Caco-2 (cell line): ENCODE measurements at regions of chr7 and their contacts with region 1.

Region 1: DNA sequence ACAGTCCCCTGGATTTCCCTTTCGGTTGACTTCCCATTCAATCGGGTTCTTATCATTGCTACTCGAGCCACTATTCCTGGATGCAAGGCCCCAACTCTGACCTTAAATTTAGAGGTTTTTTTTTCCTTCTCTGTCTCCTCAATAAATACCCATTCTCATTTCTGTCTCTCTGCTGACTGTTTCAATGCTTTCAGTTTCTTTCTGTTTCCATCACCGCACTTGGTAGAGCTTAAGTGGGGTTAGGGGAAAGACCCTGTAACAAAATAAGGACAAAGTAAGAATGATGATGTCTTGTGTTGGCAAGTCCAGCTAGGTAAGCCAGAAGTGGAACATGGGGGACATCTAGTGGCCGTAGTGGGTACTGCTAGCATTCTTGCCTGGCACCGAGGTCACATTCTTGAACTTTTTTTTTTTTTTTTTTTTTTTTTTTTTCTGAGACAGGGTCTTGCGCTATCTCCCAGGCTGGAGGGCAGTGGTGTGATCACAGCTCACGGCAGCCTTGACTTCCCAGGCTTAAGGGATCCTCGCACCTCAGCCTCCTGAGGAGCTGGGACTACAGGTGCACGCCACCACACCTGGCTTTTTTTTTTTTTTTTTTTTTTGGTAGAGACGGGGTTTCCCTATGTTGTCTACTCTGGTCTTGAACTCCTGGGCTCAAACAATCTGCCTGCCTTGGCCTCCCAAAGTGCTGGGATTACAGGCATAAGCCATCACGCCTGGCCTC is 40.3 kb downstream of the ZC3HC1 start:
- DNase-seq: peak; percentile 91 to 93
- H3K4me3 ChIP-seq: no peak overlapping the region
- H3K4me3 Mint-ChIP-seq: no peak overlapping the region
- H3K27ac Mint-ChIP-seq: peak overlapping the region; percentile 20
- H3K4me1 ChIP-seq: peaks cover 9% of the 10 kb centered on the region; the same call in 1 of the 2 replicates
- H3K4me1 Mint-ChIP-seq: peaks cover 6% of the 10 kb centered on the region
- H3K27me3 ChIP-seq: no peaks in the 10 kb centered on the region
- H3K27me3 Mint-ChIP-seq: no peaks in the 10 kb centered on the region
- CTCF ChIP-seq: peak; percentile 91 to 93

Region 2: DNA sequence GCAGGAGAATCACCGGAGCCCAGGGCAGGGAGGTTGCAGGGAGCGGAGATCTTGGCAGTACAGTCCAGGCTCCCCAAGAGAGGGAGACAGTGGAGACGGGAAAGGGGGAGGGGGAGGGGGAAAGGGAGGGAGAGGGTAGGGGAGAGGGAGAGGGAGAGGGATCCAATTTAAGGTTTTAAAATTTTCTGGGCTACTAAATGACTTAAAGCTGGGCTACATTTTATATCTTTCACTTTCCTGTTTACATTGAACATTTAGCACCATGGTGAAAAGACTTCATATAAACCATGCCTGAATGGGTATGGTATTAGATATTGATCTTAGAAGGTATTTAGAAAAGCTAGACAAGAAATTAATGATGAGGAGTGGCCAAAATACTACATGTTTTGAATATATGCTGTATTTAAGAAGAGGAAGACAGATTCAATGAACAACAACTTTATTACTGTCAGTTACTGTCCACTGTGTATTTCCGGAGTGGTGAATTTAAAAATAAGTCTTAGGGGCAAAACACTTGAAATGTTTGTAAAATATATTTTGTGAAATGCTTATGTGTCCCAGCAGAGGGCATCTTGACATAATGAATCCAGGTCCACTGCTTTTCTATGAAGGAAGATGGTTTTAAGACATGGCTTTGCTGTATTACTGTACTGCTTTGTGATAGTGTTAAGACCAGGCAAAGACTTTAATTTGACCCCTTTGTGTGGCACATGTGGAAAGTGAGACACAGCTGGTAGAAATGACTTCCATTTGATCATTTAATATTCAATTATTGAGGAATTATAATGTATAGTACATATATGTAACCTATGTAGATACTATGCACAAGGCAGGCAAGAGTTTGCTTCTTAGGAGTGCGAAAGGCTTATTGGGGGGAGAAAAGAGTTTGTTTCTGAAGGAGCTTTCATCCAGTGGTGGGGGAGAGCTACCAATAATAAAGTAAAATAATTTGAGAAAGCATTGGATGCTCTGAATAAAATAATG is 346.5 kb before region 1 on chr7:
- CTCF ChIA-PET with region 1: no interaction called
- POLR2A ChIA-PET with region 1: no interaction called
- intact Hi-C with region 1: loop called (anchors 1 kb)
- DNase-seq: peak in 1 of 2 experiments; percentile 42
- H3K4me3 ChIP-seq: no peak overlapping the region
- H3K4me3 Mint-ChIP-seq: no peak overlapping the region
- H3K27ac Mint-ChIP-seq: no peak overlapping the region
- H3K4me1 ChIP-seq: no peaks in the 10 kb centered on the region
- H3K4me1 Mint-ChIP-seq: no peaks in the 10 kb centered on the region
- H3K27me3 ChIP-seq: no peaks in the 10 kb centered on the region
- H3K27me3 Mint-ChIP-seq: no peaks in the 10 kb centered on the region
- CTCF ChIP-seq: peak; percentile 54 to 57

Region 3: GRCh38 chr7:129721068-129721467 is 289.8 kb before region 1 on chr7:
- CTCF ChIA-PET with region 1: no interaction called
- POLR2A ChIA-PET with region 1: no interaction called
- intact Hi-C with region 1: no loop called
- DNase-seq: no peak
- H3K4me3 ChIP-seq: no peak overlapping the region
- H3K4me3 Mint-ChIP-seq: no peak overlapping the region
- H3K27ac Mint-ChIP-seq: no peak overlapping the region
- H3K4me1 ChIP-seq: no peaks in the 10 kb centered on the region
- H3K4me1 Mint-ChIP-seq: peaks cover 6% of the 10 kb centered on the region
- H3K27me3 ChIP-seq: no peaks in the 10 kb centered on the region
- H3K27me3 Mint-ChIP-seq: no peaks in the 10 kb centered on the region
- CTCF ChIP-seq: no peak

Region 4: DNA sequence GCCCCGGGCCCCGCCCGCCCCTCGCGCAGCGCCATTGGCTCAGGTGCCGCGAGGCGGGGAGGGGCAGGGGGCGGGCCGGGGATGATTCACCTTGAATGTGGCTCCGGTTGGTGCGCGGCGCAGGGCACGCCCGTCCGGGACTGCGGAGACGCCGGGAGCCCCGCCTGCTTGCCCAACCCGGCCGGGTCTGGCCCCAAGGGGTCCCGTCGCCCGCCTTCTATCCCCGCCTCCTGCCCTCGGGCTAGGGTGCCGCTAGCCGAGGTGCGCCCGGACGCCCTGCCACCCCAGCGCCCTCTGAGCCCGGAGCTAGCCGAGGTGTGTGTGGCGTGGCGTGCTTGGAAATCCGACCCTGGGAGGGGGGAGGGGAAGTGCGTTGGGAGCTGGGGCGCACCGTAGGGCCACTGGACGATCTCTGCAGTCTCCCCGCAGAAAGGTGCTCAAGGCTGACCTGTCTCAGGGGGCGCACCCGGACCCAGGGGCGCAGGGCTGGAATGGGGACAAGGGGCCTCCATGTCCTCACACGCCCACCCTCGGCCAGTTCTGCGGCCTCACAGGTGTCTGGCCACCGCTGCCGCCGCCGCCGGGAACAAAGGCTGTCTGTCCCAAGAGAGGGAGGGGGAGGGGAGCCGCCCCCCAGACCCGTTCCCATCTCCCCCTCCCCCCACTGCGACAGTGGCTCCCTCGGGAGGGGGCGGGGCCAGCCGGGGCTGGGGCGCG is 230.4 kb before region 1 on chr7:
- CTCF ChIA-PET with region 1: interaction called, 5 read pairs
- POLR2A ChIA-PET with region 1: no interaction called
- intact Hi-C with region 1: loop called (anchors 5 kb)
- DNase-seq: peak; percentile 96 to 97
- H3K4me3 ChIP-seq: peak overlapping the region; percentile 84
- H3K4me3 Mint-ChIP-seq: peak overlapping the region; percentile 81
- H3K27ac Mint-ChIP-seq: no peak overlapping the region
- H3K4me1 ChIP-seq: peaks cover 12% of the 10 kb centered on the region
- H3K4me1 Mint-ChIP-seq: peaks cover 6% of the 10 kb centered on the region
- H3K27me3 ChIP-seq: no peaks in the 10 kb centered on the region
- H3K27me3 Mint-ChIP-seq: no peaks in the 10 kb centered on the region
- CTCF ChIP-seq: no peak

Region 5: DNA sequence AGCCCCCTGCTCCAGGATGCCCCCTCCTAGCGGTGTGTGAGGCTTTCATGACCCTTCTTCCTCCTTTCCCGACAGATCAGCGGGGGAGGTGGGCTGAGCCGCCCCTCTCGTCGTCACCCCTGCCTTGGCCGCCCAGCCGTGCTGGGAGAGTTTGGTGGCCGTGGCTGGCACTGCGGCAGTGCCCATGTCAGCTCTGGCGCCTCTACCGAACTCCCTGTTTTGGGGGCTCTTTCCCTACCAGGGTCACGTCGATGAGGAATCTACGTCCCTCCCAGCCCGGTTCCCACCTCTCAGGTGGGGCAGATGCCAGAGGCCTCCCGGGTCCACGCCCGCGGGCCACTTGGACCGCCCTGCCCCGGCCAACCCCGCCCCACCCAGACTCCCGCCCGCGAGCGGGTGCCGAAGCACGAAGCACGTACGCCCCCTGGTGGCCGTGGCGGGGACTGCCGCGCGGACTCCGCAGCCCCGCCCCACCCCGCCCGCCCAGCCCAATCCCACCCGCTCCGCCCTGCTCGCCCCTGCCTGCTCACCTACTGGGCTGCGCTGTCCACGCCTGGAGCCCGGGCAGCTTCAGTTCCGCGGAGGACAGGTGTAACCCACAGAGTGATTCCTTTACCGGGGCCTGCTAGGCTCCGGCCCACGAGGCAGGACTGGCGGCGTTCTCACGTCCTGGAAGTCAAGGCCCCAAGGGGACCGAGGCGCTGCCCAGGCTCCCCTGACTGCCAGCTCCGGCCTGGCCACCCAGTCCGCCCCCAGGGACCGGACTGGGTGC is 185.2 kb before region 1 on chr7:
- CTCF ChIA-PET with region 1: interaction called, 23 read pairs
- POLR2A ChIA-PET with region 1: interaction called, 3 read pairs
- intact Hi-C with region 1: loop called (anchors 1 kb)
- DNase-seq: peak; percentile 90 to 95
- H3K4me3 ChIP-seq: peak overlapping the region; percentile 82
- H3K4me3 Mint-ChIP-seq: peak overlapping the region; percentile 89
- H3K27ac Mint-ChIP-seq: peak overlapping the region; percentile 86
- H3K4me1 ChIP-seq: peaks cover 17% of the 10 kb centered on the region
- H3K4me1 Mint-ChIP-seq: peaks cover 4% of the 10 kb centered on the region
- H3K27me3 ChIP-seq: no peaks in the 10 kb centered on the region
- H3K27me3 Mint-ChIP-seq: no peaks in the 10 kb centered on the region
- CTCF ChIP-seq: peak; percentile 74 to 94

Region 6: DNA sequence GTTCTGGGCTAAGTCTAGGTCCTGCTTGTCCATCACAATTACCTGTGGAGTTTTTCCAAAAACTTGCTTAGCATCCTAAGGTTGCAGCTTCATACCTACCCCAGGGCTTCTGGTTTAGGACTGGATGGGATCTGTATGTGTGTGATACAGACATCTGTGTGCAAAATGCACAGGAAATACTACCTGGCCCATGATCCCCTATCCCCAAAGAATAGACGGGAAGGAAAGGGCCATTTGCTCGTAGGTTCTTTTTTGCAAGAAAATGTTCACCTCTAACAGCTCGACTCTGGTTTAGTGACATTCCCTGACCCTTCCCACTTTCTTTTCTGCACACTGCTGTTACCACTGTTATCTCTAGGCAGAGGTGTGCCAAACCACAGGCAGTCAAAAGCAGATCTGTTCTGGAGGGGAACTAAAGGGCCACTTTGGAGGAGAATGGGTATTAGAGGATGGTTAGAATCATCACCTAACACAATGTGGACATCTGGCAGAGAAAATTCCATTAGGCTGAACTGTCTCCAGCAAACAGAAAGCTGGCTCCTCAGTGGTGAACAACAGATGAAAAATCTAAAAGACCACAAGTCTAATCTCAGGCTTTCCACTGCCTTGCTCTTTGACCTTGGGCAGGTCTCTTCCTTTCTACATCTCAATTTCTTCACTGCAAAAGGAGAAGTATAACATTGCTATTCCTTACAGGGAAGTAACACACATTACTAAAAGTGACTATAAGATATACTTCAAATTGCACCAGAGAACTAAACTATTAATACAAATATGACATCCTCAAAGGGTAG is 165.5 kb before region 1 on chr7:
- CTCF ChIA-PET with region 1: no interaction called
- POLR2A ChIA-PET with region 1: interaction called, 11 read pairs
- intact Hi-C with region 1: no loop called
- DNase-seq: no peak
- H3K4me3 ChIP-seq: no peak overlapping the region
- H3K4me3 Mint-ChIP-seq: no peak overlapping the region
- H3K27ac Mint-ChIP-seq: no peak overlapping the region
- H3K4me1 ChIP-seq: peaks cover 9% of the 10 kb centered on the region
- H3K4me1 Mint-ChIP-seq: no peaks in the 10 kb centered on the region
- H3K27me3 ChIP-seq: no peaks in the 10 kb centered on the region
- H3K27me3 Mint-ChIP-seq: no peaks in the 10 kb centered on the region
- CTCF ChIP-seq: no peak

Region 7: DNA sequence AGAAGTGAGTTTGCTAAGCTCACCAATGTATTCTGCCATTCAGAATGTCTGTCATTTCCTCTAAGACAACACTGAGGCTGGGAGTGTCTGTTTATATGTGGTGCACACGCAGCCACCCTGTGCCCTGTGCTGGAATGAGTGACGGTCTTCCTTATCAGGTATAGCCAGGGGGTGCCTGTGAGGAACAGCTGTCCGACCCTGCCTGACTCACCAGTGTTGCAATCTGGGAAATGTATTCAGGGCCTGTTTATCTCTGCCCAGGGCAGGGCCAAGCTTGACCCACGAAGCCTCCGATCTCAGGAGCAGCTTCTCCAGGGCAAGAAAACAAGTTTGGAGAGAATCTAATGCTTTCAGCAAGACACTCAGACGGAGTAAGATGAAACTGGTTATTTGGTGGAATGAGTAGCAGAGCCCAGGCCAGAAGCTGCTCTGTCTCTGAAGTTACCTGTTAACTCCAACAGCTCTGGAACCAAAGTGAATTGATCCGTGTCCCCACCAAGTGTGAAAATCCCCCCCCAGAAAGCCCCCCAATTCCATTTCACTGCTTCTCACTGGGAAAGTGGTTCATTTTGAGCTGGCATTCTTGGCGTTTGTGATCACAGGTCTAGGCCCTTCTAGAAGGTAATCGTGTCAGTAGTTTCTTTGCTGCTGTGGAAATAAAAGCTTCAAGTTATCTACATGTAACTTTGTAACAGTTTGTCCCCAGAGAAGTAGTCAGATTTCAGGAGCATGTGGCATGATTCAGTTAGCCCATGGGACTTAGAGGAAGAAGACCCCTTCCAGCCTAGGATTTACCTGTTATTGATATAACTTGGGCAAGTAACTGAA is 52.0 kb before region 1 on chr7:
- CTCF ChIA-PET with region 1: interaction called, 10 read pairs
- POLR2A ChIA-PET with region 1: no interaction called
- intact Hi-C with region 1: loop called (anchors 2 kb)
- DNase-seq: peak; percentile 87 to 94
- H3K4me3 ChIP-seq: no peak overlapping the region
- H3K4me3 Mint-ChIP-seq: peak overlapping the region; percentile 24
- H3K27ac Mint-ChIP-seq: peak overlapping the region; percentile 79
- H3K4me1 ChIP-seq: peaks cover 25% of the 10 kb centered on the region
- H3K4me1 Mint-ChIP-seq: peaks cover 35% of the 10 kb centered on the region
- H3K27me3 ChIP-seq: no peaks in the 10 kb centered on the region
- H3K27me3 Mint-ChIP-seq: no peaks in the 10 kb centered on the region
- CTCF ChIP-seq: no peak

Region 8: DNA sequence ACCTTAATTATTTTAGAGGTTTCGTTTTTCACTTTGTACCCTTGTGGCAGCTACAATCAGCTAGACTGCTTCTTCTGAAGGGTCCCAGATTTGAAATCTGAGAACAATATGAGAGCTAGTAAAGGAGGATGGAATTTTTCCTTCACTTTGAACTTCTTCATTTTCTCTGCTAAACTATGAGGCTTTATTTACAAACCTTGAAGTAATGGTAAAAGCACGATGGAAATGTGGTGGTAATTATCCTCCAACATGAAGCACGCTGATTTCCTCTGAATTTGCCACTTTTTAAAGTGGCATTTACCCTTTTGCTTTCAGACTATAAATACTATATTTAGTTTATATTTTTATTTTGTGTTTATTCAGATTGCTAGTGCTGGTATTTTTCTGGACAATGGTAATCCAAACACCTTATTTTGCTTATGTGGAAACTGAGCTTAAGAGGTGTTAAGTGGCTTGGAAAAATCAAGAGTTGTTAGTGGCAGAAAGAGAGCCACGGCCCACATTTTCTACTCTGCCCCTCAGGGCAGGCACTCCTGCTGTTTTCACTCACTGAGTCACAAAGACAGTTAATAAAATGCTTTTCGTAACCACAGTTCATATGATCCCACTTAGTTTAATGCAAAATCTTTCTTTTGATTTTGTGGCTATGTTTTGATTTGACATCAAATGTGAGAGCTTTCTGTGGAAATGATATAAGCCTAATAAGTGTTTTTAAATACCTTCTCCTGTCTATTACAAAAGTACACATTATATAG is 199.5 kb after region 1 on chr7:
- CTCF ChIA-PET with region 1: no interaction called
- POLR2A ChIA-PET with region 1: no interaction called
- intact Hi-C with region 1: no loop called
- DNase-seq: no peak
- H3K4me3 ChIP-seq: no peak overlapping the region
- H3K4me3 Mint-ChIP-seq: no peak overlapping the region
- H3K27ac Mint-ChIP-seq: no peak overlapping the region
- H3K4me1 ChIP-seq: no peaks in the 10 kb centered on the region
- H3K4me1 Mint-ChIP-seq: no peaks in the 10 kb centered on the region
- H3K27me3 ChIP-seq: no peaks in the 10 kb centered on the region
- H3K27me3 Mint-ChIP-seq: no peaks in the 10 kb centered on the region
- CTCF ChIP-seq: no peak